G401 (cell line): ENCODE measurements at regions of chr5 and their contacts with region 1.

Region 1: DNA sequence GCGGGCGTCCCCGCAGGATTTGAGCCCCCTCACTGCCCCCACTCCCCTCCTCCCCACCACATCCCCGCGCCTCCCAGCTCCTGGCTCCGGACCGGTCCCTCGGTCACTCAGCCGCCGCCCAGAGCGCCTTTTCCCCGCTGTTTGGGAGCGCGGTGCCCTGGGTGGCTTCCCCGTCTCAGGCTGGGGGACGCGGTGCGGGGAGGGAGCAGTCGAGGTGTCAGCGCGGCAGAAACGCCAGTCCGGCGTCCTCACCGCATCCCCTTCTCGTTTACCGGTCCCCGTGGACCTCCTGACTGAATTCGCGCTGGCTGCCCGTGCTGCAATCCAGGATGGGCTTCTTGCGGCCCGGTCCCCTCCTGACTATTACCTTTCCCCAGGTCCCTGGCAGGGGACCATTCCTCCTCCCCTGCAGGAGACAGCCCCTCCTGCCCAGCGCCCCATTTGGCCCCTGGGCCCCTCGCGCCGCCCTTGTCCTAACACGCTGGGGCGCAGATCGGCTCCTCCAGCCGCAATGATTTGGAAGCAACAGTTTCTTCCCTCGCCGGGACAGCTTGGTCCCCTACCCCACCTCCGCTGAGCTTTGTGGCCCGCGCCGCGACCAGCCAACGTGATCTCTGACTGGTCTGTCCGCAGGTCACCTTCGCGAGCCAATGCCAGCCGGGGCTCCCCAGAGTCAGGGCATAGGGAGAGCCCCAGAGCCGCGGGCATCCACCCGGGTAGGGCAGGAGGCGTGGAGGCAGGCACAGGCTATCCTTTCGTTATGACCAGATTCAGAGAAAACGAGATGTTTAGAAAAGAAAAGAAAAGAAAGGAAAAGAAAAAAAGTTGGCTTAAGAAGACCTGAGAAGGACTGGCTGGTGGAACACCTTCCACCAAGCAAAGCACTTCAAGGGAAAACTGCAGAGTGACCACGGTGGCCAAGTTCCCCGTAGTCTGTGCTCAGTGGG is 1.2 kb downstream of the ANKRD33B start:
- DNase-seq: no peak

Region 2: DNA sequence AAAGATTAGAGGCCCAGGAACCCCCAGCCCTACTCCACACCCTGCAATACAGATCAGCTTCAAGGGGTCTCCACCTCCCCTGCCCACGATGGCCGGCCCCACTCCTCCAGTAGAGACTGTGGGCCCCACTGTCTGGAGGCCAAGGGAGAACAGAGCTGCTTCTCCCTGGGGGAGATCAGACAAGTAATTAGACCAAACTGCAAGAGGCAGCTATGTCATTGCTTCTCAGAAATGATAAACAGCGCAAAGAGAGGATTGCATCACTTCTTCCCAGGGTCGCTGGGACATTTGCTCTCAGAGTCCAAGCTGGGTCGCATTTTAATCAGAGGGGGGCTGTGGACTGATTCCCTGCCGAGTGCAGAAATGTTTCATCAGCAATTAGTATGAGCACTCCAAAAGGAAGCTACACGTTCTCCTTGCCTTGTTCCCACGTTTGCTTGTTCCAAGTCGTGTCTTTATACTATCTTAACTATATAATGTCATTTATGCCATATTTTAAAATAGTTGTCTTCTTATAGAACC is 63.5 kb before region 1 on chr5:
- in situ Hi-C with region 1: no loop called
- DNase-seq: no peak

Region 3: DNA sequence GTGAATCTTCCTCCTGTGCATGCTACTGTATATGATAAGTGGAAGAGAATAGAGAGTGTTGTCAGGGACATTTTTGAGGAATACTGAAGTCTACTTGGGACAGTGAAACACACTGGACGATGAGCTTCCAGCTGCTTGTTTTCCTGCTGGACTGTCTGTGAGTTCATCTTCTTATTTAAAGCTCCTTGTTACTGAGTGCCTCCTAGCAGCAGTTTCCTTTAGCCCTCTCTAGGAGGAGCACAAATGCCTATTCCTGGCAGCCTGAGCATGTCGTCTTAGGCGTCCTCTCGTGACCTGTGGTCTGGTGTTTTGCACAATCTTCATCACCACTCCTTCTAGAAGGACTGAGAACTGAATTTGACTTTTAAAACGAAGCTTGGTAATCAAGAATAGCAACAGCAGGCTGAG is 42.6 kb after region 1 on chr5:
- in situ Hi-C with region 1: loop called (anchors 5 kb)
- DNase-seq: no peak